Common myeloid progenitor, CD34-positive (primary cell): ENCODE measurements at regions of chr2 and their contacts with region 1.

Region 1: GRCh38 chr2:165015052-165015642 is 59.8 kb upstream of the SLC38A11 start:
- DNase-seq: peak; percentile 68 to 77 (median 73)
- H3K4me3 ChIP-seq: no peak overlapping the region
- H3K27ac ChIP-seq: no peak overlapping the region
- H3K4me1 ChIP-seq: peaks cover 0 to 4% (median 2%) of the 10 kb centered on the region in 4 experiments
- H3K27me3 ChIP-seq: no peaks in the 10 kb centered on the region

Region 2: GRCh38 chr2:164992818-164993217 is 22.3 kb before region 1 on chr2:
- CTCF ChIA-PET with region 1: interaction called, 10 read pairs
- POLR2A ChIA-PET with region 1: no interaction called
- DNase-seq: peak; percentile 79 to 87 (median 85)
- H3K4me3 ChIP-seq: no peak overlapping the region
- H3K27ac ChIP-seq: no peak overlapping the region
- H3K4me1 ChIP-seq: peaks cover 0 to 18% (median 11%) of the 10 kb centered on the region in 4 experiments
- H3K27me3 ChIP-seq: no peaks in the 10 kb centered on the region

Region 3: DNA sequence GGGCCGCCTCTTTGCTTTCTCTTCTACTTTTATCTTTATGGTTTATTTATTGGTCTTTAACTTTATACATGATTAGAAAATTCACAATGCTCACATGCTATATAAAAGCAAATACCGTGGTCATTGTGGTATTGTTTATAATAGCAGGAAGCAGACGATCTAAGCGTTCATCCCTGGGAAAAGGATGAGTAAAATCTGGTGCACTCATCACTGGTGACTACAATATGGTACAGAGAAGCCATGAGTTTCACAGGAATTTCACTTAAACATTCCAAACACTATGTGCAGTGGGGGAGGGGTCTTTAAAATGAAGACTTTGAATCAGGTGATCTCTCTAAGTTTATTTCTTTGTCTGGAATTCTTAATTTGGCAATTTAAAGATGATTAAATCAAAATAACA is 90.8 kb after region 1 on chr2:
- CTCF ChIA-PET with region 1: no interaction called
- POLR2A ChIA-PET with region 1: no interaction called
- DNase-seq: no peak
- H3K4me3 ChIP-seq: no peak overlapping the region
- H3K27ac ChIP-seq: no peak overlapping the region
- H3K4me1 ChIP-seq: no peaks in the 10 kb centered on the region
- H3K27me3 ChIP-seq: no peaks in the 10 kb centered on the region

Region 4: DNA sequence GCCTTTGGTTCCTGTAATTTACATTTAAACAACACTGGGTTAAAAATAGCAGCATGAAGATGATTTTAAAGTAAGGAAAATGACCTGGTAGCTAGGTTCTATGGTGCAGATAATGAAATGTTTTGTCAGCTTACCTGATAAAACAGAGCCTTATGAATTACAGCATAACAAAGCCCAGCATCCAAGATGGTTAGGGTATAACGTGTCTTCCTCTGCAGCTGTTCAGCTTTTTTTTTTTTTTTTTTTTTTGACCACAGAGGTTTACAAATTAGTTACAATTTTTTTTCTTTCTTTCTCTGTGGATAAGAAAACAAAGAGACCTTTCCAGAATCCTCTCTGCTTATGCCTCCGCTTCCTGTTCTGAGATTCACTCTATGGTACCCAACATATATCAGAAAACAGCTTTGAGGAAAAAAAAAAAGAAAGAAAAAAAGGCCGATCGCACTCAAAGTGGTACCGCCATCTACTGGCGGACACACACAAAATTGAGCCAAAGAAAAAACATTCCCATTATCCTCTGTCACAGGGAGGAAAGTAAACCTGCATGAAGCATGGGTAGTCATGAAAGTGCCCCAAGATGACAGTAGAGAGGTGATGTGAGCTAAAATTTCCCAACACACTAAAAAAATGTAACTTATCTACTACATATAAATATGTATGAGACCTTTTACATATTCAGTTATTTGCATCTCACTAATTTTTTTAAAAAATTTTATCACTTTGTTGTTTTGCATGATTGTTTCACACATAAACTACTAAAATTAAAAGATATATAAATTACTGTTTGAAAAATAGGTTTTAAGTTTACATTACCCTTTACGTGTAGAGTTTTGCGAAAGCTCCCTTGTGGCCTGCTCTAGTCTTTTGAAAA is 188.8 kb after region 1 on chr2 and contains the start of gene SCN3A:
- CTCF ChIA-PET with region 1: interaction called, 33 read pairs
- POLR2A ChIA-PET with region 1: no interaction called
- DNase-seq: peak; percentile 55 to 63 (median 62)
- H3K4me3 ChIP-seq: peak within 1 kb of the TSS in 5 of 7 experiments; percentile 1 to 61 (median 22)
- H3K27ac ChIP-seq: no peak within 1 kb of the TSS
- H3K4me1 ChIP-seq: peaks cover 4 to 10% (median 8%) of the 10 kb centered on the region in 4 experiments
- H3K27me3 ChIP-seq: no peaks in the 10 kb centered on the region

Region 5: GRCh38 chr2:165239230-165239629 is 224.1 kb after region 1 on chr2 and contains the start of gene SCN2A:
- CTCF ChIA-PET with region 1: interaction called, 12 read pairs
- POLR2A ChIA-PET with region 1: no interaction called
- DNase-seq: peak; percentile 64 to 79 (median 71)
- H3K4me3 ChIP-seq: no peak within 1 kb of the TSS
- H3K27ac ChIP-seq: no peak within 1 kb of the TSS
- H3K4me1 ChIP-seq: no peaks in the 10 kb centered on the region
- H3K27me3 ChIP-seq: no peaks in the 10 kb centered on the region